Esophagus muscularis mucosa (tissue), 4 donors: ENCODE measurements at regions of chr7 and their contacts with region 1.

Region 1: DNA sequence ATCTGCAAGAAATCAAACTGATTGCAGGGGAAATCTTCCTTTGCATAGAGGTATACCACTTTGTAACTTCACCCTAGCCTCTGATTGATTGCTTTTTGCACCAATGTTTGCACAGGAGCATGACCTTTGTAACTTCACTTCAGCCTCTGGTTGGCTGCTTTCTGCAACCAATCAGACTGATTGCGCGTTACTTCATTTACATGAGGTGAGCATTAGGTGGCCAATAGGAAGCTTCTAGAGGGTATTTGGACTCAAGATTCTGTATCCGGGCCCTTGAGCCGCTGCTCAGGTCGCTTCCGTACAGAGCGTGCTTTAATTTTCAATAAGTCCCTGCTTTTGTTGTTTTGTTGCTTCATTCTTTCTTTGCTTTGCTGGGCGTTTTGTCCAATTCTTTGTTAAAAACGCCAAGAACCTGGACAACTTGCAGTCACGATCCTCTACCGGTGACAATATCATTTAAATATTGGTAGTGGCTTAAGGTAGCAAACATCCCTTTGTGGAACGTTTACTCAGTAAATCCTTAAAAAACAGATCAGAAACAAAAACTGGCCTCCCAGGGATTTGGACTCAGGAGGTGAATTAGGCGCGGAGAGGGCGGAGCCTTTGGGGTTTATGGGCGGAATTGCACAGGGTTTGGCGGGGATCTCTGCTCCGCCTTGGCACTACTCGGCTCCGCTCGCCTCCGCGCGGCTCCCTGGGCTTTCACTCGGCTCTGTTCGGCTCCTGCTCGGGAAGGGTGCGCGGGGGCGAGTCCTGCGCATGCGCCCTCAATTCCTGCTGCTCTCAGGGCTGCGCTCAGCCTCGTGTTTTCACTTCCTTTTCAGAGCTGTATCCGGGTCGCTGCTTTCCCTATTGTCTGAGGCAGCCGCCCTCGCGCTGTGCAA is at the start of gene PHF14:
- DNase-seq: peak; percentile 98
- H3K4me3 ChIP-seq: peak within 1 kb of the TSS; percentile 77 to 94 (median 90)
- H3K27ac ChIP-seq: peak within 1 kb of the TSS; percentile 84 to 89 (median 86)
- H3K4me1 ChIP-seq: peaks cover 11 to 26% (median 20%) of the 10 kb centered on the region in 4 donors
- H3K27me3 ChIP-seq: no peaks in the 10 kb centered on the region
- CTCF ChIP-seq: no peak
- EP300 ChIP-seq: no peak
- POLR2A ChIP-seq: no peak
- total RNA-seq, gene PHF14: 23.0 to 50.7 (median 29.1) TPM

Region 2: GRCh38 chr7:10804770-10805169 is 168.5 kb before region 1 on chr7:
- intact Hi-C with region 1: no loop called
- DNase-seq: no peak
- H3K4me3 ChIP-seq: no peak overlapping the region
- H3K27ac ChIP-seq: no peak overlapping the region
- H3K4me1 ChIP-seq: peaks cover 0 to 7% (median 0%) of the 10 kb centered on the region in 4 donors
- H3K27me3 ChIP-seq: no peaks in the 10 kb centered on the region
- CTCF ChIP-seq: no peak
- EP300 ChIP-seq: no peak
- POLR2A ChIP-seq: no peak

Region 3: GRCh38 chr7:10934292-10934691 is 39.0 kb before region 1 on chr7:
- intact Hi-C with region 1: loop called (anchors 5 kb)
- DNase-seq: no peak
- H3K4me3 ChIP-seq: peak overlapping the region in 2 of 4 donors; percentile 28 to 37
- H3K27ac ChIP-seq: peak overlapping the region; percentile 79 to 92 (median 86)
- H3K4me1 ChIP-seq: peaks cover 36 to 76% (median 66%) of the 10 kb centered on the region in 4 donors
- H3K27me3 ChIP-seq: no peaks in the 10 kb centered on the region
- CTCF ChIP-seq: no peak
- EP300 ChIP-seq: no peak
- POLR2A ChIP-seq: no peak

Region 4: DNA sequence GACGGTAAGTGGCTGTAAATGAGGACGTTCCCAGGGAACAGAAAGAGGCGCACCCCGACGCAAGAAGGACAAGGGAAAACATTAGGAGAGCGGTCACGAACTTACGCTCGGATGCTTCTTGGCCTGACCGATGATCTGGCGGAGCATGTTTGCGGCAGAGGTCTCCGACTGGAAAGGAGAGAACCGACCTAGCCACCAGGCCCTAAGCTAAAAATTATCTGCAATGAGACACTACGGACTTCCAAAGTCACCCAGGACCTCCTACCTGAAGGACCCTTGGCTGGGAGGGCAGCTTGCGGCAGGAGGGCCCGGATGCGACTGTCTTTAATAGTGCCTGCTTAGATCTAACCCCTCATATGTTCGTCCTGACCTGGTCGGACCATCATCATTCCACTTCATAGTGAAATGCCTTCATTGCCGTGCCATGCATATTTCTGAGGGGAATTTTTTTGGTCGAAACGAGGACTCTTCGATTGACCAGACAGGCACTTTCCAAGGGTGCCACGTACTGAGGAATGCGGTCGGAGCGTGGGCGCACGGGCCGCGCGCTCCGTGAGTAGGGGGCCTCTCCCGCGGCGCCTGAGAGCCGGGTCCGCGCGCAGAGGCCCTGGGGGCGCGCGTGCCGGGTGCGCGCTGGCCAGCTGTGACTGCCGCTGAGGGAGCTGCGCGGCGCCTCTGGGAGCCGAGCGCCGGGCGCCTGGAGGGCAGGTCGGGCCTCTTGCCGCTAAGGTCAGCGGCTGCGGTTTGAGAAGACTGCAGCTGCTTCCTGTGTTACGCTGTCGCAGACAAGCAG is 33.2 kb before region 1 on chr7:
- intact Hi-C with region 1: loop called (anchors 2 kb)
- DNase-seq: peak; percentile 97
- H3K4me3 ChIP-seq: peak overlapping the region; percentile 55 to 83 (median 72)
- H3K27ac ChIP-seq: peak overlapping the region; percentile 87 to 92 (median 91)
- H3K4me1 ChIP-seq: peaks cover 32 to 51% (median 48%) of the 10 kb centered on the region in 4 donors
- H3K27me3 ChIP-seq: no peaks in the 10 kb centered on the region
- CTCF ChIP-seq: no peak
- EP300 ChIP-seq: no peak
- POLR2A ChIP-seq: peak; percentile 52